Transverse colon (tissue), 4 donors: ENCODE measurements at regions of chr9 and their contacts with region 1.

Region 1: GRCh38 chr9:136619742-136620440 is 42.8 kb upstream of the EGFL7 start:
- DNase-seq: peak; percentile 70
- H3K4me3 ChIP-seq: no peak overlapping the region
- H3K27ac ChIP-seq: peak overlapping the region in 3 of 4 donors; percentile 30 to 63 (median 55)
- H3K4me1 ChIP-seq: peaks cover 14 to 54% (median 40%) of the 10 kb centered on the region in 4 donors
- H3K27me3 ChIP-seq: no peaks in the 10 kb centered on the region
- CTCF ChIP-seq: no peak
- EP300 ChIP-seq: peak; percentile 16
- POLR2A ChIP-seq: peak; percentile 26

Region 2: GRCh38 chr9:136400038-136400834 is 219.7 kb before region 1 on chr9 and contains the start of gene SNAPC4:
- in situ Hi-C with region 1: no loop called
- intact Hi-C with region 1: no loop called
- DNase-seq: peak; percentile 89
- H3K4me3 ChIP-seq: peak within 1 kb of the TSS; percentile 70 to 98 (median 94)
- H3K27ac ChIP-seq: peak within 1 kb of the TSS; percentile 66 to 81 (median 76)
- H3K4me1 ChIP-seq: peaks cover 10 to 39% (median 31%) of the 10 kb centered on the region in 4 donors
- H3K27me3 ChIP-seq: no peaks in the 10 kb centered on the region
- CTCF ChIP-seq: peak; percentile 74 to 98 (median 90)
- EP300 ChIP-seq: no peak
- POLR2A ChIP-seq: peak; percentile 35
- total RNA-seq, gene SNAPC4: 6.0 to 14.5 (median 10.1) TPM

Region 3: DNA sequence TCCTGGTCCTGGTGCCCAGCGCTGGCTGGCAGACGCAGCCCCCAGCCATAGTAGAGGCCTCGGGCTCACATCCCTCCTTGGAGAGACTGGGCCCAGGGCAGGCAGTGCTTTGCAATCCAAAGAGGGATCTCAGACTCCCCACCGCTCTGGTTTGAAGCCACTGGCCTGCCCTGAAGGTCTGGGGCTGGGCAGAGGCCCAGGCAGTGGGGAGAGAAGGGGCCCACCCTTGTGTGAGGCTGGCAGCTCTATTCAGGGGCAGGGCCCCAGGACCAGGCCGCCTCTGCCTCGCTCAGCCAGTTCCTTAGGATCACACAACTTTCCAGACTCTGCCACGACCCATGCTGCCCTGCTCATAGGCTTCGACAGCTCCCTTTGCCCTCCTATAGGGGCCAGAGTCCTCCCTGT is 126.3 kb before region 1 on chr9:
- in situ Hi-C with region 1: loop called in 1 of 4 experiments (anchors 5 kb)
- intact Hi-C with region 1: loop called (anchors 2 kb)
- DNase-seq: no peak
- H3K4me3 ChIP-seq: no peak overlapping the region
- H3K27ac ChIP-seq: no peak overlapping the region
- H3K4me1 ChIP-seq: peaks cover 0 to under 1% (median under 1%) of the 10 kb centered on the region in 4 donors
- H3K27me3 ChIP-seq: no peaks in the 10 kb centered on the region
- CTCF ChIP-seq: no peak
- EP300 ChIP-seq: no peak
- POLR2A ChIP-seq: no peak